ENCODE measurements at regions of chr20 and their contacts with region 1.

Region 1: DNA sequence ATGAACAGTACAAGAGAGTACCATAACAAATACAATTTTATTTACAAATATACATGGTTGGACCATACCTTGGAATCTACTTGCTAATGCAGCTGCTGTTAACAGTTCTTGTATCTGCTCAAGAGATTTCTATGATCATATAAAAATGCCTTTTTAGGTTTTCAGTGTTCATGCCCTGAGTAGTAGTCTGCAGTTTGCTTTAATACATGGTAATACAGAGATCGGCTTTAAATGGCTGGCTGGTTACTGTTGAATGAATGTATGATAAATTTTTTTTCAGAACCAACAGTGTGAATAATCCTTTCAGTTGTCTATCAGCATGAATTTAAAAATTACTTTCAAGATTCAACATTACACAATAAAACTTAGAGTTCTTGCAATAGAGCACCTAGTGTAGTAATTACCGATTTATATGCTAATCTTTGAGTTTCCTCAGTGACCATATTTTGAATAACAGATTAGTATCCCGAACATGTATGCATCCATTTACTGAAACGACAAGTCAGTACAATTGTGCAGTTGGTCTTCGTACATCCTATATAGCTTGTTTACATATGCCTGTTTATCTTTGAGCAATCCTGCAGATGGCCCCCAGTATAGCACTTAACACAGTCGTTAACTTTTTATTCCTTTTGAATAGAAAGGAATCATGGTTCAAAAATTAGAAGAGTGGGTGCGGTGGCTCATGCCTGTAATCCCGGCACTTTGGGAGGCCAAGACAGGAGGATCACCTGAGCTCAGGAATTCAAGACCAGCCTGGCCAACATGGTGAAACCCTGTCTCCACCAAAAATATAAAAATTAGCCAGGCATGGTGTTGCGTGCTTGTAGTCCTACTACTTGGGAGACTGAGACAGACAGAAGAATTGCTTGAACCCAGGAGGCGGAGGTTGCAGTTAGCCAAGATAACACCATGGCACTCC is 6.4 kb downstream of the SRSF6 start:
- DNase-seq: no peak
- H3K4me3 ChIP-seq: no peak overlapping the region
- H3K27ac ChIP-seq: no peak overlapping the region
- H3K4me1 ChIP-seq: peaks cover 6% of the 10 kb centered on the region
- H3K27me3 ChIP-seq: no peaks in the 10 kb centered on the region
- CTCF ChIP-seq: no peak

Region 2: DNA sequence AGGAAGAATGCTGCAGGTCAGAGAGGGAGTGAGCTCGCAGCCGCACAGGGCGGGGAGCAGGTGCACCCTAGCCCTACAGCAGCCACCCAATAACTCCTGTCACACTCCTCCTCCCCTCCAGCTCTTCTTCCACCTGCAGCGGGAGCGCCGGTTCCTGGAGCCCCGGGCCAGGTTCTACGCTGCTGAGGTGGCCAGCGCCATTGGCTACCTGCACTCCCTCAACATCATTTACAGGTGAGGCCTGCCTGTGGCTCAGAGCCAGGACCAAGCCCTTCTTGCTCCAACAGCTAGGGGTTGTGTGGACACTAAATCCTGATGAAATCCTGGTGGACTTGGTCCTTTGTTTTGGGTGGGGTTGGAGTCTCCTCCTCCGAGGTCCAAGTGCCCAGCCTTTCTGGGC is 106.4 kb after region 1 on chr20:
- CTCF ChIA-PET with region 1: no interaction called
- POLR2A ChIA-PET with region 1: interaction called, 12 read pairs
- intact Hi-C with region 1: no loop called
- DNase-seq: no peak
- H3K4me3 ChIP-seq: no peak overlapping the region
- H3K27ac ChIP-seq: no peak overlapping the region
- H3K4me1 ChIP-seq: no peaks in the 10 kb centered on the region
- H3K27me3 ChIP-seq: no peaks in the 10 kb centered on the region
- CTCF ChIP-seq: no peak

Measured in A673 (cell line).